ENCODE measurements at regions of chrX and their contacts with region 1.

Region 1: GRCh38 chrX:68647156-68647957 is at the start of gene STARD8:
- DNase-seq: peak; percentile 57
- H3K4me3 ChIP-seq: peak within 1 kb of the TSS; percentile 26 to 59 (median 43)
- H3K27ac ChIP-seq: no peak within 1 kb of the TSS
- H3K4me1 ChIP-seq: peaks cover 7% of the 10 kb centered on the region
- H3K27me3 ChIP-seq: no peaks in the 10 kb centered on the region
- CTCF ChIP-seq: peak in 1 of 2 donors; percentile 11
- POLR2A ChIP-seq: no peak
- total RNA-seq, gene STARD8: 8.4 and 14.8 TPM in 2 replicates

Region 2: DNA sequence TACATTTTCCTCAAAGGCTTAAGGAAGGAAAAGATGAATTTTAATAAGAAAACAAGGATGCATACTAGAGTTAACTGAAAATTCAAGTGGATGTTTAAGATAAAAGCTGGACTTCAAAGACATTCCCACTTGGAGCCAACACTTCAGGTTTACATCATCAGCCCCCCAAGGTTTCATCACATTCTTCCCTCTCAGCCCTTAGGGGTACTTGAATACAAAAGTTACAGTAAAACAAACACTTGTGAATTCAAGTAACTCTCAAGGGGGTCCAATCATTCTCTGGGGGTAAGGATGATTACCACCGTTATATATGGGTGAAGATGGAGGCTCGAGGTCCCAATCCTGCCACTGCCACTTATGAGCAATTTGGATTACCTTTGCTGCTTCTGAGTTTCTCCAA is 36.2 kb after region 1 on chrX:
- CTCF ChIA-PET with region 1: no interaction called
- POLR2A ChIA-PET with region 1: no interaction called
- dilution Hi-C with region 1: no loop called
- intact Hi-C with region 1: no loop called
- DNase-seq: no peak
- H3K4me3 ChIP-seq: no peak overlapping the region
- H3K27ac ChIP-seq: peak overlapping the region; percentile 17
- H3K4me1 ChIP-seq: peaks cover 27% of the 10 kb centered on the region
- H3K27me3 ChIP-seq: no peaks in the 10 kb centered on the region
- CTCF ChIP-seq: no peak
- POLR2A ChIP-seq: no peak

Region 3: GRCh38 chrX:68693481-68694434 is 46.4 kb after region 1 on chrX:
- CTCF ChIA-PET with region 1: interaction called, 3 read pairs
- POLR2A ChIA-PET with region 1: interaction called, 3 read pairs
- dilution Hi-C with region 1: no loop called
- intact Hi-C with region 1: loop called (anchors 5 kb)
- DNase-seq: peak; percentile 75
- H3K4me3 ChIP-seq: peak overlapping the region; percentile 54 to 73 (median 72)
- H3K27ac ChIP-seq: peak overlapping the region; percentile 57
- H3K4me1 ChIP-seq: peaks cover 61% of the 10 kb centered on the region
- H3K27me3 ChIP-seq: no peaks in the 10 kb centered on the region
- CTCF ChIP-seq: no peak
- POLR2A ChIP-seq: peak; percentile 67